Testis (tissue), 5 donors: ENCODE measurements at regions of chr3 and their contacts with region 1.

Region 1: DNA sequence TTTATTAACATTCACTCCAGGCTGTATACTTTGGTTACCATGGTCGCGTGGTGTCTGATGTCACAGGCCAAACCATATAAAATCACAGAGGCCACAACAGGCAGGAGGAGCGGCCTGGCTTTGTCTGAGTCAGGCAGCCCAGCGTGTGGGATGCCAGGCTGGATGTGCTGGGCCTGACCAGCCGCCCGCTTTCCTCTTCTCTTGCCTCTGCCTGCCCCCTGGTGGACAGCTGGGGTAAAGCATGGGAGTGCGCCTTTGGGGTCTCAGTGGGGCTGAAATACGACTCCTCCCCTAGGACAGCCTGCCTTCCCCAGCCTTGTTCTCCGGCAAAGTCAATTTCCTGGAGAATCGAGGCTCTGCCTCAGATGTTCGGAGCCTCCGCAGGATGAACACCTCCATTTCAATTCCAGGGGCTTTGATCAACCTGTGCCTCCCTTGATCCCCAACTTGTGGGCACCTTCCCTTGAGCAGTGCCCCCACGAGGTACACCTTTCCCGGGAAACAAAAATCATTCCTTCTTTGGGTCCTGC is 78.2 kb downstream of the CCNL1 start:
- DNase-seq: peak; percentile 94
- H3K4me3 ChIP-seq: no peak overlapping the region
- H3K27ac ChIP-seq: no peak overlapping the region
- H3K4me1 ChIP-seq: peaks cover 12% of the 10 kb centered on the region
- H3K27me3 ChIP-seq: no peaks in the 10 kb centered on the region
- CTCF ChIP-seq: peak; percentile 97 to 98 (median 98)
- POLR2A ChIP-seq: no peak

Region 2: GRCh38 chr3:156547637-156548036 is 534.1 kb before region 1 on chr3:
- intact Hi-C with region 1: loop called (anchors 5 kb)
- DNase-seq: peak; percentile 41
- H3K4me3 ChIP-seq: no peak overlapping the region
- H3K27ac ChIP-seq: peak overlapping the region; percentile 75
- H3K4me1 ChIP-seq: peaks cover 55% of the 10 kb centered on the region
- H3K27me3 ChIP-seq: no peaks in the 10 kb centered on the region
- CTCF ChIP-seq: no peak
- POLR2A ChIP-seq: no peak

Region 3: DNA sequence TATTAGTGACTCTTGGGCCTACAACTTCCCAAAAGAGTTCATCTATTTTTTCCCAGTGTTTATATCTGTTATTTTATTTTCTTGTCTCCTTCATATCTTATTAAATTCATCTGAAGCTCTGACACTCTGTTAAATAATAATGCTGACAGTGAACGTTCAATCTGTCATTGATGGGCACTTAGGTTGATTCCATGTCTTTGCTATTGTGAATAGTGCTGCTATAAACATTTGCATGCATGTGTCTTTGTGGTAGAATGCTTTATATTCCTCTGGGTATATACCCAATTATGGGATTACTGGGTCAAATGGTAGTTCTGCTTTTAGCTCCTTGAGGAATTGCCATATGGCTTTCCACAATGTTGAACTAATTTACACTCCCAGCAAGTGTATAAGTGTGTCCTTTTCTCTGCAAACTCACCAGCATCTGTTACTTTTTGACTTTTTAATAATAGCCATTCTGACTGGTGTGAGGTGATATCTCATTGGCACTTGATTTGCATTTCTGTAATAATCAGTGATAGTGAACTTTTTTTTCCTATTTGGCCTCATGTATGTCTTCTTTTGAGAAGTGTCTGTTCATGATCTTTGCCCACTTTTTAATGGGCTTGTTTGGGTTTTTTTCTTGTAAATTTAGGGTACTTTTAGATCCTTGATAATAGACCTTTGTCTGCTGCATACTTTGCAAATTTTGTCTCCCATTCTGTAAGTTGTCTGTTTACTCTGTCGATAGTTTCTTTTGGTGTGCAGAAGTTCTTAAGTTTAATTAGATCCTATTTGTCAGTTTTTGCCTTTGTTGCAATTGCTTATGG is 133.1 kb before region 1 on chr3:
- intact Hi-C with region 1: no loop called
- DNase-seq: no peak
- H3K4me3 ChIP-seq: no peak overlapping the region
- H3K27ac ChIP-seq: no peak overlapping the region
- H3K4me1 ChIP-seq: no peaks in the 10 kb centered on the region
- H3K27me3 ChIP-seq: no peaks in the 10 kb centered on the region
- CTCF ChIP-seq: no peak
- POLR2A ChIP-seq: no peak